IMR-90 (cell line): ENCODE measurements at regions of chr3 and their contacts with region 1.

Region 1: DNA sequence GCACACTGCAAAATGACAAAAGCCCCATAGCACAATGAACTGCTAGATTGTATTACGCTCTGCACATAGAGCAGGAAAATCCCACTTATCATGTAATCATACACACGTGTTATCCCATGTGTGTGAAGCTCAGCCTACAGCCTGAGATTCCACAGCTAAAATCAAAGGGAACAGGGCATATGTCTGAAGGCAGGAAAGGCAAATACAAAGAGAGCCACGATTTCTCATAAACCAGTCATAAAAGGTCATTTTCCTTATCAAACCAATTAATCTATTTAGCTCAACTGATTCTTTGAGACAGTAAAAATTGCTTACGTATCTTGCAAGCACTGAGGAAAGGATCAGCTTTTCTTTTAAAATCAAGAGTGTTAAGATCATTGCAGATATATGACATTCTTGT is 199.4 kb upstream of the TBL1XR1 start:
- DNase-seq: no peak
- ATAC-seq: no peak
- H3K4me3 ChIP-seq: no peak overlapping the region
- H3K27ac ChIP-seq: no peak overlapping the region
- H3K4me1 ChIP-seq: no peaks in the 10 kb centered on the region
- H3K27me3 ChIP-seq: no peaks in the 10 kb centered on the region
- CTCF ChIP-seq: no peak
- POLR2A ChIP-seq: no peak
- RAD21 ChIP-seq: no peak

Region 2: DNA sequence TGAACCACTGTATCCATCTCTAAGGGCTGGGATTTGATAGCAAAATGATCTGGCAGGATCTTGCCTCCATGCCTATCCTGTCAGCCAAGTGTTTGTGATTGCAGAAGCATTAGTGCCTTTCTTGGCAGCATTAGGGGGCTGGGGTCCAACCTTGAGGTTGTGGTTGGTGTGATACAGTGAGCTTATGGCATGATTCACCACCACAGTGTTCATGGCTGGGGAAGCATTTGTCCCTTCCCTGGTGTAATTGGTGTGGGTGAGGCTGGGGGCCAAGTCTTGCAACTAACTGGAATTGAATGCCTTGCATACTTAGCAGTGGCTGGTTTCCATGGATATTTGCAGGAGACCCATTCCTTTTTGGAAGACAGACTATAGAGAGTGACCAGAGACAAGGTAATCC is 71.6 kb after region 1 on chr3:
- CTCF ChIA-PET with region 1: no interaction called
- POLR2A ChIA-PET with region 1: interaction called, 12 read pairs
- dilution Hi-C with region 1: no loop called
- in situ Hi-C with region 1: no loop called
- intact Hi-C with region 1: no loop called
- DNase-seq: peak; percentile 96
- ATAC-seq: peak; percentile 78
- H3K4me3 ChIP-seq: no peak overlapping the region
- H3K27ac ChIP-seq: peak overlapping the region; percentile 2; the same call in 1 of the 2 replicates
- H3K4me1 ChIP-seq: peaks cover 12% of the 10 kb centered on the region
- H3K27me3 ChIP-seq: no peaks in the 10 kb centered on the region
- CTCF ChIP-seq: no peak
- POLR2A ChIP-seq: no peak
- RAD21 ChIP-seq: no peak; the same call in 1 of the 2 replicates